ENCODE measurements at regions of chr21 and their contacts with region 1.

Region 1: DNA sequence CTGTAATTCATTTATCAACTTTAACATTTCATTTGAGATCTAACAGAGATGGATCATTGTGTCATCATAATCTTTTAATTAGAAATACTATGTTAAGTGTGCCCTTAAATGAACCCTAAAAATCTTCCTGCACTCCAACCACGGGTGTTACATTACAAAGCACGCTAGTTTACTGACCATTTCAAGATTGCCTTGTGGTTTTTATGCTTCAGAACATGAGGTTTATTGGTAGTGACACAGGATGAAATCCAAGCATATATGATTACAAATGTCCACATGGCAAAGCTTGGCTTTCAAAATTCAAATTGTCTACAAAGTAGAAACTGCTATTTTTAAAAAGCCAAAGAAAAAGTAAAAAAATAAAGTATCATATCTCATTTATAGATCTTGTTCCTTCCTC is 190.4 kb upstream of the USP25 start:
- DNase-seq: no peak
- H3K4me3 ChIP-seq: no peak overlapping the region
- H3K27ac ChIP-seq: no peak overlapping the region
- H3K4me1 ChIP-seq: no peaks in the 10 kb centered on the region
- H3K27me3 ChIP-seq: peaks cover 3 to 7% of the 10 kb centered on the region in 2 experiments
- CTCF ChIP-seq: no peak
- POLR2A ChIP-seq: no peak

Region 2: DNA sequence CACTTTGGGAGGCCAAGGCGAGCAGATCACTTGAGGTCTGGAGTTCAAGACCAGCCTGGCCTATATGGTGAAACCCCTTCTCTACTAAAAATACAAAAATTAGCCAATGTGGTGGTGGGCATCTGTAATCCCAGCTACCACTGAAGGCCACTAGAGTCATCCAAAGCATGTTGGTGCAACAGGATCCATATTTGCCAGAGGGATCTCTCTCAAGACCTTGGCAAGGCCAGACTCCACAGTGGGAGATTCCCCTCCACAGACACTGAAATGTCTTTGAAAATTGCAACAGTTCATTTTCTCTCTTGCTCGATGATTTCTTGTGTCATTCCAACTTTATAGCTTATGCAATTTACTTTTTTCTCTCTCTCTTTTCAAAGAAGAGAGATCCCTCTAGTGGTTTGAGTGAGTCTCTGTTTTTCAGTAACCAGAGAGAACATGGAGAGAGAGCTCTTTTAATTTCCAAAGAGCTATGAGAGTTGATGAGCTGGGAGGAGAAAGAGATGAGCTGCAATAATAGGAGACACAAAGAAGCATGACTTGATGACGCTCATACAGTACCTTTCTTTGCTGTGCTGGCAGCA is 13.6 kb after region 1 on chr21:
- CTCF ChIA-PET with region 1: interaction called, 13 read pairs
- POLR2A ChIA-PET with region 1: no interaction called
- dilution Hi-C with region 1: no loop called
- intact Hi-C with region 1: no loop called
- DNase-seq: no peak
- H3K4me3 ChIP-seq: no peak overlapping the region
- H3K27ac ChIP-seq: no peak overlapping the region
- H3K4me1 ChIP-seq: no peaks in the 10 kb centered on the region
- H3K27me3 ChIP-seq: peaks cover 2 to 5% of the 10 kb centered on the region in 2 experiments
- CTCF ChIP-seq: peak in 1 of 2 donors; percentile 20
- POLR2A ChIP-seq: no peak

Measured in endothelial cell of umbilical vein (primary cell).